Pancreas (tissue), 10 donors: ENCODE measurements at regions of chr13 and their contacts with region 1.

Region 1: DNA sequence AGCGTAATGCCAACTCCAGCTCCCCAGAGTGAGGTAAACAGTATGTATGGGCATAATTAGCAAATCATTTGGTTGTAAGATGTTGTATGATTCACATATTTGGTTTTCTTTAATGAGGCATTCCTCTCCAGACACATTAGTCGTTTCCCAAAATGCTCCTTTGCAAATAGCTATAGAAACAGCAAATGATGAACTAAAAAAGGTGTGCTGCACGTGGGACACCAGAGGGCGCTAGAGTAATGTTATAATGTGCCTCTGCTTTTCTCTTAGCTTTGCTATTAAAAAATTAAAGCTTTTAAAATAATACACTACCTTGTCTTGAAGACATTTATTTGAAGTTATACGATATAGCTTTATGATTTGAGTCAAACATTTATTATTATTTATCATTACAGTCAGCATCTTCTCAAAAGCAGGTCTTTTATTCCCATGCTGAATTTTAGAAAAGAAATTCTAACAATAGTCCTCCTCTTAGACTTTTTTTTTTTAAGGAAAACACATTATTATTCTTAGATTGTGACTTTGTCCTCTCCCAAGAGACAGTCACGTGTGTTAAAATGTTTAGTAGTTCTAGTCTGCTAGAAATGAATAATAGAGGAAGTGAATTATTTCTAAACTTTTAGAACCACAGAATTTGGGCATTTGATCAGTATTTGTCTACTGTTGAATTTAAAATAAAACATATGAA is 121.6 kb upstream of the FRY start:
- DNase-seq: peak in 4 of 6 donors; percentile 34 to 62 (median 50)
- ATAC-seq: peak; percentile 79 to 86 (median 82)
- H3K4me3 ChIP-seq: no peak overlapping the region
- H3K27ac ChIP-seq: no peak overlapping the region
- H3K4me1 ChIP-seq: peaks cover 0 to 9% (median 2%) of the 10 kb centered on the region in 3 donors
- H3K27me3 ChIP-seq: no peaks in the 10 kb centered on the region
- CTCF ChIP-seq: peak; percentile 57 to 87 (median 80)

Region 2: DNA sequence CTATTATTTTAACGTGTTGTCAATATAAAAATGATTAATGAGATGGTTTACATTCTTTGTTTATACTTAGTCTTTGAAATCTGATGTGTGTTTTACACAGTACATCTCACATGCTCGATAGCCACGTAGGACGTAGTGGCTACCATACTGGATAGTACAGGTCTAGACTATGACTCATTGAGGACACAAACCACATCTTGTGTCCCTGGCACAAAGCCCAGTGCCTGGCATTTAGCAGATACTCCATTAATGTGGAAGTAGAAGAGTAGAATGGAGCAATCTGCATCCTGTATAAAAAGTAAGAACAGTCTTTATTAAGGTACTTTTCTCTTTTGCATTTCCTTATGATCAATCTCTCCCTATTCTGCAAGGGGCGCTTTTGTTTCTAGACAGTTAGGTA is 72.5 kb after region 1 on chr13:
- intact Hi-C with region 1: loop called in 1 of 3 experiments (anchors 10 kb)
- DNase-seq: peak; percentile 48 to 82 (median 72)
- ATAC-seq: peak; percentile 82 to 96 (median 87)
- H3K4me3 ChIP-seq: no peak overlapping the region
- H3K27ac ChIP-seq: no peak overlapping the region
- H3K4me1 ChIP-seq: peaks cover 0 to 14% (median 8%) of the 10 kb centered on the region in 3 donors
- H3K27me3 ChIP-seq: no peaks in the 10 kb centered on the region
- CTCF ChIP-seq: no peak

Region 3: DNA sequence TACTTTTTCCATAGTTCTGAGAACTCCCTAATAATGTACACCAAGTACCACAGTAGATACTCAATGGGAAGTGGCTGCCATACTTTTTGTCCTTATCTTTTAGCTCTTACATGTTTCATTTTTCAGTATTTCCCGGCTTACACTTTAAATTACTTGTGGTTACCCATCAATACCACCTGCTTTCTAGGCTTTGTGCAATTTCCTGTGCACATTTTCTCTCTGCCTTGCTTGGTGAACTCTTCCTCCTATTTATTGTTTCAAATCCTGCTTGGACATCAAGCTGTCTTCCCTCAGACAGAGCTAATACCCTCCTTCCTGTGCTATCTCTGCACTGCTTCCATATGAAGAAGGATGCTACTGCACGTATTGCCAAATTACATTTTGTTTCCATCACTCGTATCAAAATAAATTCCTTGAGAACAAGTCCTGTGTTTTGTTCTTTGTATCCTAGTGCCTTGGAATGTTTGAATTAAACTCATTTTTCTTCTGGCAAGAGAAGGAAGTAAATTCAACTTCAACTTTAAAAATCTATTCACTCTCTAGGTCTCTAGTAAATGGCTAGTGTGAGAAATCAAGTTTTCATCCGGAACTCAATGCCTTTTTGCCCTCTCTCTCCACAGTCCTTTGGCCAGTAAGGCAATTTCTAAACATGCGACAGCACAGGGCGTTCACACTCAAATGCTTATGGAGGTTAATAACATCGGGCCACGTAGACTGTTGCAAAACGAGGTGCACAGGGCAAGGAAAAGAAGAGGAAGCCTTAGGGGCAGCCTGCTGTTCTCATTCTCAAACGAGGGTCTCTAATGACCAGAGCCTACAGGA is 399.5 kb after region 1 on chr13:
- intact Hi-C with region 1: loop called in 1 of 3 experiments (anchors 10 kb)
- DNase-seq: no peak
- ATAC-seq: peak; percentile 53 to 72 (median 71)
- H3K4me3 ChIP-seq: peak overlapping the region in 2 of 4 donors; percentile 20 to 28
- H3K27ac ChIP-seq: no peak overlapping the region
- H3K4me1 ChIP-seq: peaks cover 0 to 5% (median 0%) of the 10 kb centered on the region in 3 donors
- H3K27me3 ChIP-seq: no peaks in the 10 kb centered on the region
- CTCF ChIP-seq: no peak

Region 4: DNA sequence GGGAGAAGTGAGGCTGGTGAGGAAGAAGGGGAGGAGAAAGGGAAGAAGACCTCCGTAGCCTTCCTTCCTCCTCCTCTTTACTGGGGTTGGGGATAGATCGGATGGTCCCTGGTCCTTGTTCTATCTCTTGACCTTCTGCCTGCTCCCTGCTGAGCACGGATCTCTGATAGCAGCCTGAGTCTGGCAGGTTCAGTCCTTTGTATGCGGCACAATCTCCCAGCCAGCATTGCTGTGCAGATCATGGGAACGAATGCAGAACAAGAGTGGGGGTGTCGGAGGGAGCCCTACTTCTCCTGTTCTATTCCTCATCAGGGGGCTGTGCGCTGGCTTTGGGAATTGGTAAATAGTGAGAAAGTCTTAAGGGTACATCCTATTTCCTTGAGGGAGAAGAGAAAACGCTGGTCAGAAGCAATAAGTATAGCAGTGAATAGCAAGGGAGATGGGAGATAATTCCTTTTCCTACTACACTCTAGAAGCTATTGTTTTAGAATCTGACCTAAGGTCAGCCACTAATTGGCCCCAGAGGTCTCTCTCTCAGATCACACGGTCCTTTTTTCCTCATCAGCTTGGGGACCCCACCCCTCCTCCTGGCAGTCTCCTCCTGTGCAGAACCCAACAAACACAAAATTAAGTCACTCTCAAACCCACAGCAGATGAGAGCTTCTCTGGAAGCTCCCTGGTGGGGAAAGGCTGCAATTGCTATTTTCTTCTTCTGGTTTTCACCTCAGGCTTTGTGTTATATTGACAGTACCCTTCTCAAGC is 1147.2 kb after region 1 on chr13:
- intact Hi-C with region 1: no loop called
- DNase-seq: no peak
- ATAC-seq: peak in 1 of 4 donors; percentile 40
- H3K4me3 ChIP-seq: no peak overlapping the region
- H3K27ac ChIP-seq: no peak overlapping the region
- H3K4me1 ChIP-seq: no peaks in the 10 kb centered on the region
- H3K27me3 ChIP-seq: no peaks in the 10 kb centered on the region
- CTCF ChIP-seq: no peak